Posterior cingulate gyrus (tissue), 11 donors: ENCODE measurements at regions of chr11 and their contacts with region 1.

Region 1: GRCh38 chr11:126039485-126040271 is 23.0 kb downstream of the CDON start:
- DNase-seq: no peak

Region 2: DNA sequence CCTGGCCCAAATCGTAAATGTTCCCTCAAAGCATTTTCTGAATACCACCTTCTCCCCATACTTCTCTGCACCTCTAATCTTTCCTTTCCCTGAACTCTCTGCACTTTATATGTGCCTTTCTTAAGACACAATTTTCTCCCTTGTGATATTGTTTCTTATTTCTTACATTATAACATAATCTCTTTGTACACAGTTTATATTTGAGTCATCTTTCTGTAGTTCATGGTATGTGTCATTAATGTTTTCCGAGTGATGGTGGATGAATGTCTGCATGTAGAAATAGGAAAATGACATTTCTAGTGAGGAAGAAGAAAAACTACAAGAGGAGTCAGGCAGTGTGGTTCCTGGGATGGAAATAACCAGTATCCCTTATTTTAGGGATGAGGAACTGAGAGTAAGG is 364.5 kb before region 1 on chr11:
- intact Hi-C with region 1: no loop called
- DNase-seq: no peak

Region 3: GRCh38 chr11:126090452-126090851 is 50.8 kb after region 1 on chr11:
- intact Hi-C with region 1: loop called (anchors 10 kb)
- DNase-seq: peak in 1 of 10 donors; percentile 42